ENCODE measurements at regions of chr3 and their contacts with region 1.

Region 1: GRCh38 chr3:50358911-50359759 is at the start of gene TMEM115:
- DNase-seq: peak; percentile 100
- total RNA-seq, gene TMEM115: 35.4 and 43.1 TPM in 2 replicates

Region 2: GRCh38 chr3:50028336-50028735 is 330.8 kb before region 1 on chr3:
- in situ Hi-C with region 1: no loop called
- DNase-seq: no peak

Region 3: DNA sequence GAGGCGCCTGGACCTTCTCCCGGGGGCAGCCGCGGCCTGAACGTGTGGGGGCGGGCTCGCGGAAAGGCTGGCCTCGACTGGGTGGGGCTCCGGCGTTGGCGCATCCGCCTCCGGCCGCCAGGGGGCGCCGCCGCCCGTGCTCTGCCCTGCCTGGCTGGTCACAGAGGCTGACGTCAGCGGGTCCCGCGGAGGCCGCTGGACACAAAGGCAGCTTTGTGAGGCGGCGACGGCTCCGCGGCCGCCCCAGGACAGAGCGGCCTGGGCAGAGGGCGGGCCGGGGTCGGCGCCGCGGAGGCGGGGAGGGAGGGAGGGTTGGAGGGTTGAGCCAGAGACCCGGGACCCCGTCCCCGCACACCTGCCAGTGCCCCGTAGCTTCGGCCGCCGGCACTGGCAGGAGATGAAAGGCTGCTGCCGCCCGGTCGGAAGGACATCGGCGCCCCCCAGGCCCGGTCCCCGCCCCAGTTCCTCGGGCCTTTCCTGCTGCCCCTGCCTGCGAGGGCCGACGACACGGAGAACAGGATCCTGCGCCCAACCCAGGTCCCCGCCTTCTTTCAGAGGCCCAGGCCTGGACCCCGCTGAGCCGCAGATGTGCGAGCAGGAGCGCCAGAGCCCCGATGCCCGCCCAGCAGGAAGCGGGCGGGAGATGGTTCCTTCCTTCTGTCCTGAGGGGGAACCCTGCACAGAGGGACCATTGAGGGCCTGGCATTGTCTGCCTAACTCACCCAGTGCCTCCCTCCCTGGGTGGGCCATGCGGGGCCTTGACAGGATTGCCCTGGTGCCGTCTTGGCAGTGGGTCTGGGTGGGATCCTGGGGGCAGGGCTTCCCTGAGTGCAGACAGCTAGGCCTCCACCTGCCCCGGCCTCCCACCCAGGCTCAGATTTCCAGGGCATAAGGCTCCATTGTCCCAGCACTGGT is 98.9 kb before region 1 on chr3:
- in situ Hi-C with region 1: loop called (anchors 10 kb)
- DNase-seq: peak; percentile 90

Region 4: DNA sequence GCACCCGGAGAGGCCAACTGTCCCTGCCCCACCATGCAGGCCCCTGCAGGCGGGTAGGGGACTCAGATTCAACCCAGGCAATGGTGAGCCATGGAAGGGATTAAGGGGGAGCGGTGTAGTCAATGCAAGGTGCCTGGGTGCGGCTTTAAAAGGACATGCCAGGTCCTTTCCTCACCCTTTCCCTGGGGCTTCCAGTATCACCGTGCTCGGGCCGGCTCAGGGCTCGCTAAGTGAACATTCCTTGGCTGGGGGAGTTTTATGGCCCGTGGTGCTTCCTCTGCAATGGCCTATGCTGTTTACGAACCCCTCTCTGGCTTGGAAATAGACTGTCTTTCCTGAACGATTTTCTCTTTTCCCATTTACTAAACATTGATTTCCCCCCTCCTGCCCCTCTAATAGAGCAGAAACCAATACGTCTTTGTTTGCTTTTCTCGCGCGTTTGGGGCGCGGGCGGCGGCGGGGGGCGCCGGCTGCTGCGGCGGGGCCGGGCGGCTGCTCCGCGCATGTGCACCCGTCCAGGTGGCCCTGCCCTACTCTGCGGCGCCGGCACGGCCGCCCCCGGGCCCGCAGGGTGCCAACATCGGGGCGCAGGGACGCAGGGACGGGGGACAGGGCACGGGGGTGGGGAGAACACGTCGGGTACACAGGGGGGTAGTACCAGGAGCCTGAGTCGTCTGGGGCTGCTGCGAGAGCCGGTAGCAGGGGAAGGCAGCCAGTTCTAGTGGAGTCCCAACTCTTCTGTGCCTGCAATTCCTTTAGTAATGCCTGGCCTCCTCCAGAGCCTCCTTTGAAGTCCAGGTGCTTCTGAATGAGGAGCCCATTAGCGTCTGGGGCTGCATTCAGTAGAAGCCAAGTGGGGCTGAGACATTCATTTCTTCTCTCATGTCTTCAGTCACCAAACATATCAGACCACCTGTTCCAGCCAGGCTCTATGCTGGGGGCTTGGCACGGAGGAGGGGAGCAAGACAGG is 171.2 kb after region 1 on chr3:
- in situ Hi-C with region 1: loop called (anchors 10 kb)
- DNase-seq: no peak